Sigmoid colon (tissue), 7 donors: ENCODE measurements at regions of chr17 and their contacts with region 1.

Region 1: GRCh38 chr17:55731586-55732250 is 9.1 kb upstream of the TMEM100 start:
- DNase-seq: peak; percentile 91
- H3K4me3 ChIP-seq: peak overlapping the region in 3 of 4 donors; percentile 13 to 19 (median 17)
- H3K27ac ChIP-seq: peak overlapping the region; percentile 77 to 85 (median 80)
- H3K4me1 ChIP-seq: peaks cover 0 to 87% (median 71%) of the 10 kb centered on the region in 4 donors
- H3K27me3 ChIP-seq: no peaks in the 10 kb centered on the region
- CTCF ChIP-seq: no peak
- EP300 ChIP-seq: no peak
- POLR2A ChIP-seq: no peak

Region 2: DNA sequence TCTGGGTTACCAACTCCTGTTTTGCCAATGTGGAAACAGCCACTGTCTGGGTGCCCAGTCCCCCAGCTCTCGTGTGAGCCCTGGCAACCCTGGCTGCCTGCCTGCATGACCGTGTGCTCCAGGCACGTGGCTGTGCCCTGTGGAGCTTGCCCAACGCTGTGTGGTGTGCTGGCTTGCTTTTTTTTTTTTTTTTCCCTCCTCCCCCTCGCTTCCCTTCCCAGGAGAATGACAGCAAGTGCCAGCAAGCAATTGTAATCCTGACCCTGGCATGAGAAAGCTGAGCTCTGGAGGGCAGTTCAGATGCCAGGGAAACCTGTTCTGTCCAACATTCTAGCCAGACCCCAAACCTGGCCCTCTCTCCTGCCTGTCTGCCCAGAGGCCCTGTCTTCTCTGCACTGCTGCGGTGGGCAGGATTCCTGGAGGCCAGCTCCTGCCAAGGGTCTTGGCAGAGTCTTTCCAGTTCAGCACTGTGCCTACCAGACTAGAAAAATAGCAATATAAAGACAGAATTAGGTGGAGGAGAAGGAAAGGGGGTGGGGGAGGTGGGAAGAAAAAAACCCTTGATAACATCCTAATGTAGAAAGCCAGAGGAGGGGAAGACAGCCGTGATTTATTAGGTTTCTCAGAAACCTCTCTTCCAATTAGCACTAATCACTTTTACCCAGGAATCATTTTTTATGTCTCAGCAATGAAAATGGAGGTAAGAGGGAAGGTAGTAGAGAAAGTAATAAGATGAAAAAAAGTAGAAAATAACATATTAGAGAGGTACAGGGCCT is 458.0 kb before region 1 on chr17:
- intact Hi-C with region 1: loop called (anchors 5 kb)
- DNase-seq: peak; percentile 93
- H3K4me3 ChIP-seq: peak overlapping the region in 2 of 4 donors; percentile 11 to 14
- H3K27ac ChIP-seq: peak overlapping the region; percentile 81 to 97 (median 95)
- H3K4me1 ChIP-seq: peaks cover 0 to 98% (median 88%) of the 10 kb centered on the region in 4 donors
- H3K27me3 ChIP-seq: no peaks in the 10 kb centered on the region
- CTCF ChIP-seq: no peak
- EP300 ChIP-seq: peak in 3 of 4 donors; percentile 24 to 69 (median 49)
- POLR2A ChIP-seq: no peak

Region 3: GRCh38 chr17:55699181-55699860 is 32.4 kb before region 1 on chr17:
- intact Hi-C with region 1: no loop called
- DNase-seq: no peak
- H3K4me3 ChIP-seq: no peak overlapping the region
- H3K27ac ChIP-seq: no peak overlapping the region
- H3K4me1 ChIP-seq: peaks cover 0 to 2% (median 1%) of the 10 kb centered on the region in 4 donors
- H3K27me3 ChIP-seq: no peaks in the 10 kb centered on the region
- CTCF ChIP-seq: no peak
- EP300 ChIP-seq: no peak
- POLR2A ChIP-seq: no peak

Region 4: GRCh38 chr17:55770148-55770870 is 38.6 kb after region 1 on chr17:
- intact Hi-C with region 1: loop called (anchors 5 kb)
- DNase-seq: no peak
- H3K4me3 ChIP-seq: no peak overlapping the region
- H3K27ac ChIP-seq: peak overlapping the region in 3 of 4 donors; percentile 36 to 63 (median 48)
- H3K4me1 ChIP-seq: peaks cover 0 to 21% (median 19%) of the 10 kb centered on the region in 4 donors
- H3K27me3 ChIP-seq: no peaks in the 10 kb centered on the region
- CTCF ChIP-seq: peak; percentile 31 to 62 (median 57)
- EP300 ChIP-seq: no peak
- POLR2A ChIP-seq: no peak